ENCODE measurements at regions of chr3 and their contacts with region 1.

Region 1: DNA sequence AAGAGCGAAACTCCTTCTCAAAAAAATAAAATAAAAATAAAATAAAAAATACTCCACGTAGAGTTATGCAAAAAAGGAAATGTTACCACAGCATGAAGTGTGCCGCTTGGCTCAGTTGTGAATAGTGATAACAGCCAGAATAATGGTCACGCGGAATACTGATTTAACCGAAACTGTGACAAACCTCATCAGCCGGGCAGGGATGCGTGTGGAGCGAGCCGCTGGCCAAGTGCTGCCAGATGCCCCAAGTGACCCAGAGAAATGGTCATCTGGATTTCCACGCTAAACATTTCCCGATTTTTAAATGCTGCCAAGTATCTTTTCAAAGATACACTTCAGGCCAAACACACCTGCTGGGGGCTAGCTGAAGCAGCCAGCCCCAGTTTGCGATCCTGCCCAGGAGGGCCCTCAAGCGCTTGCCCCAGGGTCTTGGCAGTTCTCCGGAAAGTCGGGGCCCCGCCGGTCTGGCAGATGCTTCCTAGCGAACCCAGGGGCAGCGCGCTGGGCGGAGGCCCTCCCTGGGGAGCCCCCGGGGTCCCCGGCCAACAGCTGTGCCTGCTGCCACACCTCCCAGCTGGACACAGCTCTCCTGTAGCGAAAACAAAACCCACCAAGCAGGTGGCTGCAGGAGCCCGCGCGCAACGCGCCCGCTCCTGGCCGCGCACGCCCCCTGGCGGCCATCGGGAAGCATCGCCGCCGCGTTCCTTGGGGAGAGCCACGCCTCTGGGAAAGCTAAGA is 35.1 kb downstream of the CMTM6 start:
- DNase-seq: peak; percentile 42 to 80
- ATAC-seq: peak; percentile 89

Region 2: GRCh38 chr3:32296256-32297204 is 171.0 kb before region 1 on chr3:
- intact Hi-C with region 1: loop called in 1 of 2 experiments (anchors 10 kb)
- DNase-seq: peak; percentile 31 to 62
- ATAC-seq: peak; percentile 82

Measured in left colon (tissue), 2 donors.